A549 (cell line): ENCODE measurements at regions of chr19 and their contacts with region 1.

Region 1: DNA sequence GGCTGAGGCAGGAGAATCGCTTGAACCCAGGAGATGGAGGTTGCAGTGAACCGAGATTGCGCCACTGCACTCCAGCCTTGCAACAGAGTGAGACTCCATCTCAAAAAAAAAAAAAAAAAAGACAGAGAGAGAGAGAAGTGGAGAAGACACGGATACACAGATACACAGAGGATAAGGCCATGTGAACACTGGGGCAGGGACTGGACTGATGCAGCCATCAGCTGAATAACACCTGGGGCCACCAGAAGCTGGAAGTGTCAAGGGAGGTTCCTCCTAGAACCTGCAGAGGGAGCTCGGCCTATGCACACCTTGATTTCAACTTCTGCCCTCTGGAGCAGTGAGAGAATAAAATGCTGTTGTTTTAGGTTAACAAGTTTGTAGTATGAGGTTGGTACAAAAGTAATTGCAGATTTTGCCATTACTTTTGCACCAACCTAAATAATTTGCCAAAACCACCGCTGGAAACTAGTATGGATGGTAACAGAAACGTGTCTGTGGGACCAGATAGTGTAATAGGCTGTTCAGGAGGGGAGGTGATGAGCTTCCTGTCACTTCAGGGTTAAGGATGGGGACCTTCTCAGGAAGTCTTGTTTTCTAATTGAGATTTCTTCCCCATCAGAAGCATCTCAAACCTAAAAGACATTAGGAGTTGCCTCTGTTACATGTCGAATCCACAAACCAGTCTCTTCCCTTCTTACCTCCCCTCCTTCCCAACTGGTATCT is 36.4 kb upstream of the IGSF23 start:
- DNase-seq: peak; percentile 65 to 81
- ATAC-seq: peak; percentile 91 to 94
- H3K4me3 ChIP-seq: no peak overlapping the region
- H3K27ac ChIP-seq: peak overlapping the region in 1 of 2 experiments; percentile 5; a peak in 1 of 6 replicates
- H3K4me1 ChIP-seq: no peaks in the 10 kb centered on the region
- CTCF ChIP-seq: peak; percentile 86
- EP300 ChIP-seq: no peak
- POLR2A ChIP-seq: no peak
- RAD21 ChIP-seq: peak; percentile 84 to 96

Region 2: GRCh38 chr19:44566067-44566466 is 10.9 kb before region 1 on chr19:
- CTCF ChIA-PET with region 1: interaction called, 11 read pairs
- POLR2A ChIA-PET with region 1: no interaction called
- DNase-seq: no peak
- ATAC-seq: no peak
- H3K4me3 ChIP-seq: no peak overlapping the region
- H3K27ac ChIP-seq: no peak overlapping the region
- H3K4me1 ChIP-seq: peaks cover 2% of the 10 kb centered on the region
- CTCF ChIP-seq: no peak
- EP300 ChIP-seq: no peak
- POLR2A ChIP-seq: no peak
- RAD21 ChIP-seq: no peak

Region 3: GRCh38 chr19:44587963-44588770 is 11.2 kb after region 1 on chr19:
- CTCF ChIA-PET with region 1: interaction called, 75 read pairs
- POLR2A ChIA-PET with region 1: no interaction called
- DNase-seq: peak; percentile 84 to 85
- ATAC-seq: peak; percentile 85 to 96
- H3K4me3 ChIP-seq: peak overlapping the region; percentile 13; the same call in 1 of the 3 replicates
- H3K27ac ChIP-seq: peak overlapping the region; percentile 90 to 94
- H3K4me1 ChIP-seq: peaks cover 75% of the 10 kb centered on the region
- CTCF ChIP-seq: peak; percentile 83
- EP300 ChIP-seq: peak; percentile 71 to 81; a peak in 3 of 5 replicates
- POLR2A ChIP-seq: no peak
- RAD21 ChIP-seq: peak; percentile 71 to 93

Region 4: DNA sequence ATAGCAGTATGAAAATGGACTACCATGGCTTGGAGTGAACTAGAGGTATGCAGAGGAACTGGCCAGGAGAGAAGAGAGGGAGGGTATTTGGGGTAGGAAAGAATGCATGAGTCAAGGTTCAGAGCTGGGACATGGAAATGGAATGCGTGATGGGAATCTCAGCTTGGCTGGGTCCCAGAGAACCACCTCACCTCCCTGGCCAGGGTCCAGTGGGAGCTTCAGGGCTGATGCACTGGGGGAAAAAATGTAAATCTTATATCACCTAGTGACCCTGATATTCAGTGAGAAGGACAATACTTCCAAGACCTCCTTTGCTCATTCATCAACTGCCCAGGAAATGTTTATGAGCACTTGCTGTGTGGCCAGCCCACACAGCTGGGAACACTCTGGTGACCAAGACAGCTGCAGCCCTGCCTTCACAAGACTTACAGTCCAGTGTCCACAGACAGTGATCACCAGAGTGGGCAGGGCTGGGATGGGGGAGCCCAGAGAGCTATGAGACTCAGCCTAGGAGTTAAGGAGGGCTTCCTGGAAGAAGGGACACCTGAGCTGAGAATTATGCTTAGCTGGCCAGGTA is 49.1 kb after region 1 on chr19:
- CTCF ChIA-PET with region 1: interaction called, 13 read pairs
- POLR2A ChIA-PET with region 1: no interaction called
- DNase-seq: peak; percentile 79 to 93
- ATAC-seq: peak; percentile 90 to 91
- H3K4me3 ChIP-seq: no peak overlapping the region
- H3K27ac ChIP-seq: peak overlapping the region; percentile 81 to 89
- H3K4me1 ChIP-seq: peaks cover 43% of the 10 kb centered on the region
- CTCF ChIP-seq: no peak
- EP300 ChIP-seq: peak; percentile 65 to 74; a peak in 2 of 5 replicates
- POLR2A ChIP-seq: no peak
- RAD21 ChIP-seq: peak; percentile 25 to 34; a peak in 4 of 5 replicates

Region 5: GRCh38 chr19:44643605-44644401 is 66.8 kb after region 1 on chr19 and contains the start of gene PVR:
- CTCF ChIA-PET with region 1: interaction called, 12 read pairs
- POLR2A ChIA-PET with region 1: no interaction called
- DNase-seq: peak; percentile 91 to 98
- ATAC-seq: peak; percentile 86 to 90
- H3K4me3 ChIP-seq: peak within 1 kb of the TSS; percentile 61
- H3K27ac ChIP-seq: peak within 1 kb of the TSS; percentile 91 to 97
- H3K4me1 ChIP-seq: peaks cover 75% of the 10 kb centered on the region
- CTCF ChIP-seq: no peak
- EP300 ChIP-seq: peak in 1 of 2 experiments; percentile 51; a peak in 1 of 5 replicates
- POLR2A ChIP-seq: peak; percentile 72
- RAD21 ChIP-seq: no peak; a peak in 1 of 5 replicates
- polyA plus RNA-seq, gene PVR: 108 and 110 TPM in 2 replicates